Activated naive CD4-positive, alpha-beta T cell treated with anti-CD3 and anti-CD28 coated beads for 36 hours (primary cell): ENCODE measurements at regions of chr22 and their contacts with region 1.

Region 1: DNA sequence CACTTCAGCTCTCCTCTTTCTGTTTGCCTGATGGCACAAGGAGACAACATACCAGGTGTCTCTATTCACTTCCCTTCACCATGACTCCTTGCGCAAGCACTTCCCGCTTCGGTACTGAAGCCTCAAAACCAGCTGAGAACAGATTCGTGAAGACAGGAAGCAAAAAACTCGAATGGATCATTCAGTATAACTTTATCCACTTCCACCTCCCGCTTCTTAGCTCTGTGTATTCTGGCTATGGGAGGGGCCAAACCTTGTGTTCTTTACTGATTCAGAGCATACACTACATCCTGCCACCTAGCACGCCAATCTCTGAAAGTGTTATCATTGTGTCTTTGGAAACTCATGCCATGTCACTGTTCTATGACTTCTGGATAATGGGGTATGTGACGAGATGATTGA is 62.2 kb upstream of the ADA2 start:
- DNase-seq: peak; percentile 71
- H3K4me3 Mint-ChIP-seq: peak overlapping the region; percentile 38
- H3K27ac Mint-ChIP-seq: peak overlapping the region; percentile 79
- H3K4me1 Mint-ChIP-seq: peaks cover 15% of the 10 kb centered on the region
- H3K27me3 Mint-ChIP-seq: no peaks in the 10 kb centered on the region

Region 2: GRCh38 chr22:16949561-16949960 is 331.9 kb before region 1 on chr22:
- CTCF ChIA-PET with region 1: no interaction called
- intact Hi-C with region 1: loop called (anchors 2 kb)
- DNase-seq: peak; percentile 71
- H3K4me3 Mint-ChIP-seq: no peak overlapping the region
- H3K27ac Mint-ChIP-seq: no peak overlapping the region
- H3K4me1 Mint-ChIP-seq: peaks cover 14% of the 10 kb centered on the region
- H3K27me3 Mint-ChIP-seq: peaks cover 2% of the 10 kb centered on the region

Region 3: DNA sequence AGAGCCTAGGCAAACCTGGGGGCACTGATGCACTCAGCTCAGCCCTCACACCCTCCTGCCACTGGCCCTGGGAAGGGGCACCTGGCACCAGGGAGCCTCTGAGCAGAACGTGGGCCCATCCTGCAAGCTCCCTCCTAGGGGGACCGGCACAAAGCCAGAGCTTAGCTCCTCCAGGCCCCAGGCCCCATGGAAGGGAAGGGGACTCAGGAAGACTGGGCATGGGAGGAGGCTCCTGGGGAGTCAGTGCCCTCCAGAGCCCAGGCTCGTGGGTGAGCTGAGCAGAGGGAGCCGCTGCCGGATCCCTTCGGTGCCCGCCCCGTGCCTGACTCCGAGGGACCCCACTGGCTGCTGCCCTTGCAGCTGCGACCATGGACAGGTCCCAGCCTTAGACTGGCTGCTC is 90.7 kb before region 1 on chr22:
- CTCF ChIA-PET with region 1: no interaction called
- intact Hi-C with region 1: no loop called
- DNase-seq: no peak
- H3K4me3 Mint-ChIP-seq: no peak overlapping the region
- H3K27ac Mint-ChIP-seq: no peak overlapping the region
- H3K4me1 Mint-ChIP-seq: no peaks in the 10 kb centered on the region
- H3K27me3 Mint-ChIP-seq: no peaks in the 10 kb centered on the region

Region 4: GRCh38 chr22:17303840-17304779 is 22.7 kb after region 1 on chr22:
- CTCF ChIA-PET with region 1: no interaction called
- intact Hi-C with region 1: loop called (anchors 1 kb)
- DNase-seq: peak; percentile 76
- H3K4me3 Mint-ChIP-seq: no peak overlapping the region
- H3K27ac Mint-ChIP-seq: peak overlapping the region; percentile 76
- H3K4me1 Mint-ChIP-seq: peaks cover 21% of the 10 kb centered on the region
- H3K27me3 Mint-ChIP-seq: no peaks in the 10 kb centered on the region

Region 5: GRCh38 chr22:17638432-17639246 is 357.2 kb after region 1 on chr22 and contains the start of gene BCL2L13:
- CTCF ChIA-PET with region 1: no interaction called
- intact Hi-C with region 1: loop called (anchors 5 kb)
- DNase-seq: peak; percentile 94
- H3K4me3 Mint-ChIP-seq: peak within 1 kb of the TSS; percentile 85
- H3K27ac Mint-ChIP-seq: peak within 1 kb of the TSS; percentile 89
- H3K4me1 Mint-ChIP-seq: peaks cover 22% of the 10 kb centered on the region
- H3K27me3 Mint-ChIP-seq: no peaks in the 10 kb centered on the region
- total RNA-seq, gene BCL2L13: 32.2 to 32.6 TPM